ENCODE measurements at regions of chr13 and their contacts with region 1.

Region 1: DNA sequence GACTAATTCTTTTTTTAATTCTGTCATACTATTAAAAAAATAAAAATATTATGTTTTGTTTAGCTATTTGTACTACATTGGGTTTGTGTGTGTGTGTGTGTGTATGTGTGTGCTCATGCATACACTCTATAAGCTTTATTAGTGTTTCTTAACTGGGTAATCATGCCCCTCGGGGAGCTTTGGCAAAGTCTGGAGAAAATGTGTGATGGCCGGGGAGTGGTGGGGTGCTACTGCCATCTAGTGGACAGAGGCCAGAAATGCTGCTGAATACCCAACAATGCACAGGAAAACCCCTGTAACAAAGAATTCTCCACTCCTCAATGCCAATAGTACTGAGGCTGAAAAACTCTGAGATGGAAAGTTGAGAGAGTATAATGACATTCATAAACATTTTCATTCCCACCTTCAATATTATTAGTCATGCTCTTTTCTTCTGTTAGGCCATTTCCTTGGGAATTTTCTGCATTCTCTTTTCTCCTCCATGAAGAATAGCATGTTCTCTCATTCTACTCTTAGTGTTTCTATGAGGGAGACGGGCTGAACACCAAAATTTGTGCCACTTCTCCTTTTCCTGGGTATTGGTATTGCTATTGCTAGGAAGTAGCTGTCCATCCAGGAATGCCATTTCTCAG is 157.3 kb downstream of the DNAJC3 start:
- DNase-seq: peak; percentile 59
- H3K4me3 ChIP-seq: no peak overlapping the region
- CTCF ChIP-seq: peak; percentile 91

Region 2: DNA sequence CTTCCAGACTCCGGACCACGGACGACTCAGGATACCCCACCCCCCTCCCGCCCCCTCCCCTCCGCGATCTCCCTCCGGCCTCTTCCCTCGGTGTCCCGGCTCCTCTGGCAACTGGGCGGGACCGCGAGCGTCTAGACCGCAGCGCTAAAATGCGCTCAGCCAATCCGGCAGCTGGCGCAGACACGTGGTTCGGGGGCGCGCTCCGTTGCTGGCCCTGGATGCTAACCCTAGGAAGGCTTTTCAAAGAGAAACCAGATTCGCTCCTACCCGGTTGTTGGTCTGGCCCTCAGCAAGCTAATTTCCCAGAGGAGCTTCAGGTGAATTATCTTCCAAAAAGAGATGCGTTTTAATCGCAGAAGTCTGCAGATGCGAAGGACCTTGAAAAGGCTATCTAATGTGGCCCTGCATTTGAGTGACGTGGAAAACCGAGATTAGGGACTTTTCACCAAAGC is 189.6 kb before region 1 on chr13 and contains the start of gene DZIP1:
- in situ Hi-C with region 1: loop called (anchors 25 kb)
- DNase-seq: peak; percentile 61
- H3K4me3 ChIP-seq: peak within 1 kb of the TSS; percentile 74
- CTCF ChIP-seq: no peak

Region 3: GRCh38 chr13:95676762-95677563 is 157.3 kb before region 1 on chr13 and contains the start of gene DNAJC3:
- in situ Hi-C with region 1: loop called (anchors 5 kb)
- DNase-seq: peak; percentile 95
- H3K4me3 ChIP-seq: peak within 1 kb of the TSS; percentile 66
- CTCF ChIP-seq: no peak

Region 4: GRCh38 chr13:96041326-96042110 is 207.3 kb after region 1 on chr13:
- in situ Hi-C with region 1: no loop called
- DNase-seq: no peak
- H3K4me3 ChIP-seq: no peak overlapping the region
- CTCF ChIP-seq: no peak

Region 5: GRCh38 chr13:96200810-96201209 is 366.6 kb after region 1 on chr13:
- in situ Hi-C with region 1: no loop called
- DNase-seq: no peak
- H3K4me3 ChIP-seq: no peak overlapping the region
- CTCF ChIP-seq: no peak